ENCODE measurements at regions of chr12 and their contacts with region 1.

Region 1: DNA sequence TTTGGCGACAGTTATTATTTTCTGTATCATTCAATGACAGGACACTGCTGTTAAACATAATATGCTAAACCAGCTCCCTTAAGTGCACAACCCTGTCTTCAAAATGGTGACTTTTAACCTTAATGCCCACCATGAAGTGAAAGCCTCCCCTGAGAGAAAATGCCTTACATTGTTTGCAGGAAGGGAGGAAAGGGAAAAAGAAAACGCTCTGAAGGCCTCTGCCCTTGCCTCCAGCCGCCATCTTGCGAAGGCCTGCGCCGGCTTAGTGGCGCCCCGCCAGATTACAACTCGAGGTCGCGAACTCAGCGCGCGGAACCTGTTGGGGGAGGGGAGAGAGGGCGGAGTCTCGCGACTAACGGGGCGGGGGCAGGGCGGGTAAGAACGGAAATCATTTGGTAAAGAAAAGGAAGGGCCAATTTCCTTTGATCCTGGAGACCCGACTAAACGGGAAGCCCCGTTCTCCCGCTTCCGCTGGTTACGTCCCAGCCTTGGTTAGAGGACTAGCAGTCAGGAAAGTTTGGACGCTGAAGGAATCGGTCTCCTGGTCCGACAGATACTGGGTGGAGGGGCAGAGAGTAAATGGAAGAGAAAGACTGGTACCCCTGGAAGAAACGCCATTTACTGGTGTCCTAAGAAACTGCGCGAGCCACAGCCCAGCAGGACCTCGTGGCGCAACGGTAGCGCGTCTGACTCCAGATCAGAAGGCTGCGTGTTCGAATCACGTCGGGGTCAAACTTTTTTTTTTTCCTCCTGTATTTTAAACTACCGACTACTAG is 11.6 kb upstream of the TMPO start:
- DNase-seq: peak; percentile 83 to 97 (median 91)

Region 2: DNA sequence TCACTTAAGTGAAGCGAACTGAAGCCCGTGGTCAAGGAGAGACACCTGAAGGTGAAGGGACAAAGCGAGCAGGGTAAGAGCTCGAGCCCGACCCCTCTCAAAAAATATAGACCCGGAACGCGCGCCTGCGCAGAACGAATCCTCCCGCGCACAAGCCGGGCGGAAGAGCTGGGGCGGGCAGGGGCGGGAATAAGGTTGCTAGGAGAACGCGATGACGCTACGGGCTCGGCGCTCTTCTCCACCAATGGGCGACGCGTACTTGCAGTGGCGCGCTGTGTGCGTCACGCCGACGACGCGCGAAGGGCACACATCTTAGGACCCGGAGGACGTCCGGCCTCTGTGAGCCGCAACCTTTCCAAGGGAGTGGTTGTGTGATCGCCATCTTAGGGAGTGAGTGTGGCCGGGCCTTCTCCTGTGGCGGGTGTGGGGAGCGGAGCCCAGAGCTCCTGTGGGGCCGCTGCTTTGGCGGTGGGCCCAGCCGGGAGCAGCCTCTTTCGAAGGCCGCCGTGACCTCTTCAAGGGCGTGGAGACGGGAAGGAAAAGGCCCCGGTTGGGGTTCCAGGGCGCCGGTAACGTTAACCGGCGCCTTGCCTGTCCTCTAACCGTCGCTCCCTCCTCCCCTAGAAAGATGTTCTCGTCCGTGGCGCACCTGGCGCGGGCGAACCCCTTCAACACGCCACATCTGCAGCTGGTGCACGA is 89.7 kb after region 1 on chr12 and contains the start of gene SLC25A3:
- intact Hi-C with region 1: loop called (anchors 10 kb)
- DNase-seq: peak; percentile 90 to 98 (median 97)

Measured in head of caudate nucleus (tissue), 42 donors.